Activated naive CD4-positive, alpha-beta T cell treated with anti-CD3 and anti-CD28 coated beads for 36 hours (primary cell): ENCODE measurements at regions of chr11 and their contacts with region 1.

Region 1: GRCh38 chr11:108697872-108698473 is 33.1 kb downstream of the DDX10 start:
- DNase-seq: peak; percentile 67
- H3K4me3 Mint-ChIP-seq: no peak overlapping the region
- H3K27ac Mint-ChIP-seq: no peak overlapping the region
- H3K4me1 Mint-ChIP-seq: no peaks in the 10 kb centered on the region
- H3K27me3 Mint-ChIP-seq: no peaks in the 10 kb centered on the region

Region 2: GRCh38 chr11:108871152-108871551 is 173.2 kb after region 1 on chr11:
- CTCF ChIA-PET with region 1: interaction called, 11 read pairs
- intact Hi-C with region 1: loop called (anchors 1 kb)
- DNase-seq: peak; percentile 67
- H3K4me3 Mint-ChIP-seq: no peak overlapping the region
- H3K27ac Mint-ChIP-seq: no peak overlapping the region
- H3K4me1 Mint-ChIP-seq: peaks cover 29% of the 10 kb centered on the region
- H3K27me3 Mint-ChIP-seq: no peaks in the 10 kb centered on the region